Naive thymus-derived CD4-positive, alpha-beta T cell (primary cell): ENCODE measurements at regions of chr6 and their contacts with region 1.

Region 1: GRCh38 chr6:13614926-13615798 is at the start of gene NOL7:
- DNase-seq: peak; percentile 96 to 99 (median 98)
- ATAC-seq: peak; percentile 98
- H3K4me3 ChIP-seq: peak within 1 kb of the TSS; percentile 85
- H3K4me3 Mint-ChIP-seq: peak within 1 kb of the TSS; percentile 82 to 98 (median 94)
- H3K27ac ChIP-seq: peak within 1 kb of the TSS; percentile 81
- H3K27ac Mint-ChIP-seq: peak within 1 kb of the TSS; percentile 85 to 97 (median 94)
- H3K4me1 ChIP-seq: peaks cover 8 to 26% of the 10 kb centered on the region in 2 donors
- H3K4me1 Mint-ChIP-seq: peaks cover 25 to 55% (median 47%) of the 10 kb centered on the region in 7 donors
- H3K27me3 ChIP-seq: no peaks in the 10 kb centered on the region
- H3K27me3 Mint-ChIP-seq: peaks cover 0 to 2% (median 0%) of the 10 kb centered on the region in 5 donors
- total RNA-seq, gene NOL7: 49.1 to 65.2 (median 62.1) TPM

Region 2: GRCh38 chr6:13395272-13396237 is 219.6 kb before region 1 on chr6:
- CTCF ChIA-PET with region 1: no interaction called
- POLR2A ChIA-PET with region 1: no interaction called
- intact Hi-C with region 1: no loop called
- DNase-seq: no peak
- ATAC-seq: peak; percentile 75
- H3K4me3 ChIP-seq: no peak overlapping the region
- H3K4me3 Mint-ChIP-seq: no peak overlapping the region
- H3K27ac ChIP-seq: no peak overlapping the region
- H3K27ac Mint-ChIP-seq: no peak overlapping the region
- H3K4me1 ChIP-seq: peaks cover 0 to 6% of the 10 kb centered on the region in 2 donors
- H3K4me1 Mint-ChIP-seq: peaks cover 1 to 14% (median 5%) of the 10 kb centered on the region in 7 donors
- H3K27me3 ChIP-seq: no peaks in the 10 kb centered on the region
- H3K27me3 Mint-ChIP-seq: no peaks in the 10 kb centered on the region

Region 3: GRCh38 chr6:13635948-13636658 is 20.9 kb after region 1 on chr6:
- CTCF ChIA-PET with region 1: interaction called, 7 read pairs
- POLR2A ChIA-PET with region 1: interaction called, 22 read pairs
- intact Hi-C with region 1: no loop called
- DNase-seq: peak in 1 of 9 donors; percentile 13
- ATAC-seq: peak; percentile 34
- H3K4me3 ChIP-seq: no peak overlapping the region
- H3K4me3 Mint-ChIP-seq: peak overlapping the region in 5 of 10 donors; percentile 9 to 69 (median 51)
- H3K27ac ChIP-seq: peak overlapping the region; percentile 42
- H3K27ac Mint-ChIP-seq: peak overlapping the region in 8 of 9 donors; percentile 49 to 87 (median 74)
- H3K4me1 ChIP-seq: peaks cover 0 to 6% of the 10 kb centered on the region in 2 donors
- H3K4me1 Mint-ChIP-seq: peaks cover 15 to 37% (median 31%) of the 10 kb centered on the region in 7 donors
- H3K27me3 ChIP-seq: no peaks in the 10 kb centered on the region
- H3K27me3 Mint-ChIP-seq: no peaks in the 10 kb centered on the region

Region 4: DNA sequence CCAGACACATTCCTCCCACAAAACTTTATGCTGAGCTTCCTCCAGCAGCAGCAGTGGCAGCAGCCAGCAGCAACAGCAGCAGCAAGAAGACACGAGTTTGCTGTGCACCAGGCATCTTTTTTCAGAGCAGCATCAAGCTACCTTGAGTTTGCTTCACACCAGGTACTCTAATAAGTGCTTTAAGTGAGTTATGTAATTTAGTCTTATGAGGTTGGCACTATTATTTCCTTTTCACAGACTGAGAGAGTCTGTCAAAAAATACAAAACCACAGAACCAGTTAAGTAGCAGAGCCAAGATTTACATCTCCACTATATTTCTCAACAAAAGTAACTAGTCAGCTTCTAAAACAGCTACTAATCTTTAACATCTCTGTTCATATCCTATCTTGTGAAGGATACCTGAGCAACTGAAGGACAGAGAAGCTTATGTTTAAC is 72.8 kb after region 1 on chr6:
- CTCF ChIA-PET with region 1: no interaction called
- POLR2A ChIA-PET with region 1: interaction called, 13 read pairs
- intact Hi-C with region 1: no loop called
- DNase-seq: peak in 7 of 9 donors; percentile 37 to 76 (median 64)
- ATAC-seq: peak; percentile 87
- H3K4me3 ChIP-seq: peak overlapping the region; percentile 13
- H3K4me3 Mint-ChIP-seq: peak overlapping the region; percentile 33 to 83 (median 70)
- H3K27ac ChIP-seq: peak overlapping the region; percentile 66
- H3K27ac Mint-ChIP-seq: peak overlapping the region; percentile 53 to 97 (median 94)
- H3K4me1 ChIP-seq: peaks cover 43 to 54% of the 10 kb centered on the region in 2 donors
- H3K4me1 Mint-ChIP-seq: peaks cover 40 to 73% (median 65%) of the 10 kb centered on the region in 7 donors
- H3K27me3 ChIP-seq: no peaks in the 10 kb centered on the region
- H3K27me3 Mint-ChIP-seq: no peaks in the 10 kb centered on the region

Region 5: GRCh38 chr6:13767121-13767808 is 152.1 kb after region 1 on chr6:
- CTCF ChIA-PET with region 1: interaction called, 3 read pairs
- POLR2A ChIA-PET with region 1: interaction called, 6 read pairs
- intact Hi-C with region 1: loop called in 1 of 2 experiments (anchors 1 kb)
- DNase-seq: peak in 8 of 9 donors; percentile 12 to 48 (median 30)
- ATAC-seq: peak; percentile 66
- H3K4me3 ChIP-seq: peak overlapping the region; percentile 51
- H3K4me3 Mint-ChIP-seq: peak overlapping the region; percentile 53 to 86 (median 76)
- H3K27ac ChIP-seq: no peak overlapping the region
- H3K27ac Mint-ChIP-seq: peak overlapping the region in 7 of 9 donors; percentile 6 to 92 (median 59)
- H3K4me1 ChIP-seq: peaks cover 8 to 13% of the 10 kb centered on the region in 2 donors
- H3K4me1 Mint-ChIP-seq: peaks cover 10 to 49% (median 30%) of the 10 kb centered on the region in 7 donors
- H3K27me3 ChIP-seq: no peaks in the 10 kb centered on the region
- H3K27me3 Mint-ChIP-seq: peaks cover 0 to 6% (median 0%) of the 10 kb centered on the region in 5 donors

Region 6: GRCh38 chr6:13827032-13827431 is 211.9 kb after region 1 on chr6:
- CTCF ChIA-PET with region 1: no interaction called
- POLR2A ChIA-PET with region 1: no interaction called
- intact Hi-C with region 1: no loop called
- DNase-seq: no peak
- ATAC-seq: no peak
- H3K4me3 ChIP-seq: no peak overlapping the region
- H3K4me3 Mint-ChIP-seq: no peak overlapping the region
- H3K27ac ChIP-seq: no peak overlapping the region
- H3K27ac Mint-ChIP-seq: no peak overlapping the region
- H3K4me1 ChIP-seq: no peaks in the 10 kb centered on the region
- H3K4me1 Mint-ChIP-seq: peaks cover 0 to 2% (median 0%) of the 10 kb centered on the region in 7 donors
- H3K27me3 ChIP-seq: no peaks in the 10 kb centered on the region
- H3K27me3 Mint-ChIP-seq: peaks cover 6 to 14% (median 9%) of the 10 kb centered on the region in 5 donors

Region 7: DNA sequence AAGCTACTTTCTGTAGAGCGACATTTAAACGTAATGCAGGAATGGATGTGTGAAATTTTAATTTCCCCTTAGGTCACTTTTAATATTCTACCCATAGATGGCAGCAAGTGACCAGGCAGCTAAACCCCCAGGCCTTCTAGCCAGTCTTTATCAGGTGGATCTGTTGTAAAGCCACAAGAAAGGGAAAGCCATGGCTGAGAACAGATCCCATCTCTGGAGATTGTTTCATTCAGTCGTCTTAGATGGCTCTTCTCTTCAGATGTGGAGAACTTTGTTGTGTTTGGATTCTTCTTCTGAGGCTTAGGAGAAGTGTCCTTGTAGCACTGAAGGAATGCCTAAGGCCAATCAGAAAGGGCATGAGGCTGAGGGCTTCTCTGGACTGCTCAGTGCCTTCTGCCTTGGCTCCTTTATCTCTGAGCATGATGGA is 293.8 kb after region 1 on chr6:
- CTCF ChIA-PET with region 1: no interaction called
- POLR2A ChIA-PET with region 1: no interaction called
- intact Hi-C with region 1: no loop called
- DNase-seq: peak in 7 of 9 donors; percentile 22 to 56 (median 36)
- ATAC-seq: peak; percentile 92
- H3K4me3 ChIP-seq: no peak overlapping the region
- H3K4me3 Mint-ChIP-seq: no peak overlapping the region
- H3K27ac ChIP-seq: no peak overlapping the region
- H3K27ac Mint-ChIP-seq: no peak overlapping the region
- H3K4me1 ChIP-seq: peaks cover 0 to 5% of the 10 kb centered on the region in 2 donors
- H3K4me1 Mint-ChIP-seq: peaks cover 0 to 8% (median 3%) of the 10 kb centered on the region in 7 donors
- H3K27me3 ChIP-seq: no peaks in the 10 kb centered on the region
- H3K27me3 Mint-ChIP-seq: peaks cover 24 to 51% (median 39%) of the 10 kb centered on the region in 5 donors

Region 8: DNA sequence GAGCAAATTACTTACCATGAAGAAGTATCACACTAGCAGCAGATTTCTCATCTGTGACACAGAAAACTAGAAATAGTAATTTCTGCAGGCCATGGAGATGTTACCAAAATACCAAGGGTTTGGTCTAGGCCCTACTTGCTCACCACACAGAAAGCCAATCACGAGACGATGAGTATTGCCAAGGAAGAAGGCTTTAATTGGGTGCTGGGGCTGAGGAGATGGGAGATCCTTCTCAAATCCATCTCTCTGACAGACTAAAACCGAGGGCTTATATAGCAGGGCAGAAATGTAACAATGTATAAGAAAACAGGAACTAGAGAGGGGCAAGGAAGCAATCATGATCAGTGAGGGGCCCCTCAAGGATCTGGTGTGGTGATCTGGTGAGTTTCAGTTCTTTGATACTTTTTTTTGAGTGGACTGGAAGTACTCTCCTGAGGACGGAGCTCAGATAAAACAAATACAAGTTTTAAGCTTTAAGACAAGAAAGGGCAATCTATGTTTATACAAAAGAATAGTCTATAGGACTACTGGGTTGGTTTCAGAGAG is 350.5 kb after region 1 on chr6:
- CTCF ChIA-PET with region 1: no interaction called
- POLR2A ChIA-PET with region 1: no interaction called
- intact Hi-C with region 1: no loop called
- DNase-seq: no peak
- ATAC-seq: no peak
- H3K4me3 ChIP-seq: no peak overlapping the region
- H3K4me3 Mint-ChIP-seq: no peak overlapping the region
- H3K27ac ChIP-seq: no peak overlapping the region
- H3K27ac Mint-ChIP-seq: no peak overlapping the region
- H3K4me1 ChIP-seq: no peaks in the 10 kb centered on the region
- H3K4me1 Mint-ChIP-seq: no peaks in the 10 kb centered on the region
- H3K27me3 ChIP-seq: no peaks in the 10 kb centered on the region
- H3K27me3 Mint-ChIP-seq: peaks cover 21 to 50% (median 41%) of the 10 kb centered on the region in 5 donors

Region 9: DNA sequence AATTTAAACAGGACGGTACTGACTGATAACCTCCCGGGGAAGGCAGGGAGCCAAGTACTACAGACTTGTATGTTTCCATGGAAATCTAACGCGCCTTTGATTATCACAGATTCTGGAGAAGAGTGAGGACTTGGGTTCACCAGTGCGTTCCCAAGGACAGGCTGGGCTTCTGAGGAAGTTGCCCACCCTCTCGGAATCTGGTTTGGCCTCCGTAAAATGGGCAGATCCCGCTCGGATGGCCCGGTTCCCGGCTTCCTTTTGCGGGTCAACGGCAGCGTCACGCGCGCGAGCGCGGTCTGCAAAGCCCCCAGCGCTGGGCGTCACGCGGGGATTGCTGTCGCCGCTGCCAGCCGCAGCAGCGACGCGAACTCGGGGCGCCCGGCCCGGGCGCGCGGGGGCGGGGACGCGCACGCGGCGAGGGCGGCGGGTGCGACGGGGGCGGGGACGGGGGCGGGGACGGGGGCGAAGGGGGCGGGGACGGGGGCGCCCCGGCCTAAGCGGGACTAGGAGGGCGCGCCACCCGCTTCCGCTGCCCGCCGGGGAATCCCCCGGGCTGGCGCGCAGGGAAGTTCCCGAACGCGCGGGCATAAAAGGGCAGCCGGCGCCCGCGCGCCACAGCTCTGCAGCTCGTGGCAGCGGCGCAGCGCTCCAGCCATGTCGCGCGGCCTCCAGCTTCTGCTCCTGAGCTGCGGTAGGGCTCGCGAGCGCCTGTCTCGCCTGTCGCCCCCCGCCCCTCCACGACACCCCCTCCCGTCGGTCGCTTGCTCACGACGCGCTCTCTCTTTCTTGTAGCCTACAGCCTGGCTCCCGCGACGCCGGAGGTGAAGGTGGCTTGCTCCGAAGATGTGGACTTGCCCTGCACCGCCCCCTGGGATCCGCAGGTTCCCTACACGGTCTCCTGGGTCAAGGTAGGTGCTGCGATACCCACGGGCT is 502.3 kb after region 1 on chr6 and contains the start of gene CD83:
- CTCF ChIA-PET with region 1: no interaction called
- POLR2A ChIA-PET with region 1: no interaction called
- intact Hi-C with region 1: loop called (anchors 1 to 5 kb)
- DNase-seq: peak; percentile 79 to 89 (median 84)
- ATAC-seq: peak; percentile 94
- H3K4me3 ChIP-seq: peak within 1 kb of the TSS; percentile 91
- H3K4me3 Mint-ChIP-seq: peak within 1 kb of the TSS; percentile 87 to 97 (median 93)
- H3K27ac ChIP-seq: peak within 1 kb of the TSS; percentile 87
- H3K27ac Mint-ChIP-seq: peak within 1 kb of the TSS; percentile 91 to 96 (median 94)
- H3K4me1 ChIP-seq: peaks cover 11 to 15% of the 10 kb centered on the region in 2 donors
- H3K4me1 Mint-ChIP-seq: peaks cover 18 to 41% (median 28%) of the 10 kb centered on the region in 7 donors
- H3K27me3 ChIP-seq: no peaks in the 10 kb centered on the region
- H3K27me3 Mint-ChIP-seq: peaks cover 0 to 35% (median 0%) of the 10 kb centered on the region in 5 donors
- total RNA-seq, gene CD83: 5.0 to 113 (median 18.3) TPM